ENCODE measurements at regions of chr10 and their contacts with region 1.

Region 1: GRCh38 chr10:117541909-117542705 is 439 bp upstream of the EMX2 start:
- DNase-seq: peak; percentile 71

Region 2: DNA sequence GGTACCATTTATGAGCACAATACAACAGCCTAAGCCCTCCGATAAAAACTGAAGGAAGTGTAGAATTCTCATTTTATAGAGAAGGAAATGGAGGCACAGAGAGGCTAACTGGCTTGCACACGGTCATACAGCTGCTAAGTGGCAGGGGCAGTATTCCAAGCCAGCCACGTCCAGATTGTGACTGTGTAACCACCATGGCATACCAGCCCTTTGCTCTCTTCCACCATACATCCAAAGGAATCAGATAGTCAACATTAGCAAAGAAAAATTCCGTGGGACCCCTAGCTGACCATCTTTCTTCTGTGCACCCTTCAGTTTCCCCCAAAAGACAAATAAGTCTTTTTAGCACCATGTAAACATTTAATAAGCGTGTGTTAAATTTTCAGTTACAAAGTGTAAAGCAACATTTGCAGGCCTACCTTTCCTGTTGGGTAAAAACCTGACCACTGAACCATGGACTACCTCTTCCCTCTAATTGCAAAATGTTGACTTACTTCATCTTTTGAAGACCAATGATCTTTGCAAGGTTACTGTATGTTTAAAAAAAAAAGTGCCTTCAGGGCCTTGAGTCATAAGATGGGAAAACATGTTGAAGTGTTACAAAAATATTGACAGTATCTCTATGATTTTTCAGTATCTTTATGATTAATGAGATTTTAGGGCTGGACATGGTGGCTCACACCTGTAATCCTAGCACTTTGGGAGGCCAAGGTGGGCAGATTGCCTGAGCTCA is 142.6 kb before region 1 on chr10:
- intact Hi-C with region 1: no loop called
- DNase-seq: no peak

Region 3: DNA sequence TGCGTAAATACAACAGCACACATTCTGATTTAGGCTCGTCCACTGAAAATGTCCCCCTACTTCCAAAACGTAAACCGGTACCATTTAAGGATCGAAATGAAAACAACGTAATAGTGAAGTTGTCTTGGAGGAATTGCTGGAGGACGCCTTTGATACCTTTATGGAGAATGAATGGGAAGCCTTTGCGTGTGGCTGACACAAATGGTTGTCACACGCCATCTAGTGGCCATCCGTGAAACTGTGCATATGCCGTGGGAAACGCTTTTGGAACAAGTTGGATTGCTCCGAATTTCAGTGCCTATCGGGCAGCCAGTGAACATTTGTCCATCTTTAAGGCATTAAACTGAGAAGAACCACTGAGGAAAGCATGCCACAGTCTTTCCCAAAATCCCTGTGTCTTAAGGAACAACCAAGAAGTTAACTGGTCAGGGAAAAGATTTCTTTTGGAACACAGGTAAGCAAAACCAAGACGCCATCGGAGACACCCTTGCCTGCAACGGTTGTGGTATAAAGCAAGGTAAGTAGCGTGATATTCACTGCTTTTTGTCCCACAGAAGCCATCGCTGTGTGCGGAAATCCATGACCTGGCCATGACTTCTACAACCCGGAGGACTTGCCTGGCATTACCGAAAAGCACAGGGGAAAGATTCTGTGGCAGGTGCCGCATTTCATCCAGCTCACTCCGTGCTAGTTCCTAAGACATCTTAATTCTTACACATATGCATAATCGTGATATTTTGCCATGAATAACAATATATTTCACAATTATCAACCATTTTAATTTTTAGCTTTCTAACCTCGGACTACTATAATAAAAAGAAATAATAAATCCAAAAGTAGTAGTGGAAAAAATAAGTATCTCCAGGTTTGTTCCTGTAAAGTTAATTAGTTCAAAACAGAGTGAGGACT is 699.4 kb after region 1 on chr10:
- intact Hi-C with region 1: loop called (anchors 2 kb)
- DNase-seq: peak; percentile 80

Measured in cardiac septum (tissue), 1 donor.